Caco-2 (cell line): ENCODE measurements at regions of chr15 and their contacts with region 1.

Region 1: GRCh38 chr15:89822026-89822950 is 7.6 kb upstream of the ANPEP start:
- DNase-seq: no peak
- H3K4me3 ChIP-seq: no peak overlapping the region
- H3K4me3 Mint-ChIP-seq: no peak overlapping the region
- H3K27ac Mint-ChIP-seq: no peak overlapping the region
- H3K4me1 ChIP-seq: no peaks in the 10 kb centered on the region
- H3K4me1 Mint-ChIP-seq: no peaks in the 10 kb centered on the region
- H3K27me3 ChIP-seq: no peaks in the 10 kb centered on the region
- H3K27me3 Mint-ChIP-seq: no peaks in the 10 kb centered on the region
- CTCF ChIP-seq: no peak

Region 2: GRCh38 chr15:89776274-89777072 is 45.8 kb before region 1 on chr15 and contains the start of gene MESP2:
- CTCF ChIA-PET with region 1: no interaction called
- POLR2A ChIA-PET with region 1: no interaction called
- intact Hi-C with region 1: no loop called
- DNase-seq: peak; percentile 64 to 75
- H3K4me3 ChIP-seq: peak within 1 kb of the TSS; percentile 39
- H3K4me3 Mint-ChIP-seq: peak within 1 kb of the TSS; percentile 45
- H3K27ac Mint-ChIP-seq: no peak within 1 kb of the TSS
- H3K4me1 ChIP-seq: peaks cover 27% of the 10 kb centered on the region
- H3K4me1 Mint-ChIP-seq: peaks cover 10% of the 10 kb centered on the region
- H3K27me3 ChIP-seq: no peaks in the 10 kb centered on the region
- H3K27me3 Mint-ChIP-seq: no peaks in the 10 kb centered on the region
- CTCF ChIP-seq: no peak
- total RNA-seq, gene MESP2: 0.32 and 0.70 TPM in 2 replicates

Region 3: GRCh38 chr15:89802231-89802928 is 19.9 kb before region 1 on chr15:
- CTCF ChIA-PET with region 1: interaction called, 13 read pairs
- POLR2A ChIA-PET with region 1: no interaction called
- intact Hi-C with region 1: no loop called
- DNase-seq: no peak
- H3K4me3 ChIP-seq: no peak overlapping the region
- H3K4me3 Mint-ChIP-seq: no peak overlapping the region
- H3K27ac Mint-ChIP-seq: no peak overlapping the region
- H3K4me1 ChIP-seq: peaks cover 12% of the 10 kb centered on the region
- H3K4me1 Mint-ChIP-seq: no peaks in the 10 kb centered on the region
- H3K27me3 ChIP-seq: no peaks in the 10 kb centered on the region
- H3K27me3 Mint-ChIP-seq: no peaks in the 10 kb centered on the region
- CTCF ChIP-seq: no peak